Activated CD8-positive, alpha-beta T cell treated with anti-CD3 and anti-CD28 coated beads, Interleukin-2, amount 10 ng/mL, durations not matched to agents 7 days and 5 days (primary cell): ENCODE measurements at regions of chr7 and their contacts with region 1.

Region 1: GRCh38 chr7:155205368-155206317 is 92.0 kb upstream of the INSIG1 start:
- DNase-seq: peak; percentile 96
- ATAC-seq: peak; percentile 95
- H3K4me3 Mint-ChIP-seq: peak overlapping the region; percentile 71
- H3K27ac Mint-ChIP-seq: peak overlapping the region; percentile 97
- H3K4me1 Mint-ChIP-seq: peaks cover 27% of the 10 kb centered on the region
- H3K27me3 Mint-ChIP-seq: no peaks in the 10 kb centered on the region

Region 2: DNA sequence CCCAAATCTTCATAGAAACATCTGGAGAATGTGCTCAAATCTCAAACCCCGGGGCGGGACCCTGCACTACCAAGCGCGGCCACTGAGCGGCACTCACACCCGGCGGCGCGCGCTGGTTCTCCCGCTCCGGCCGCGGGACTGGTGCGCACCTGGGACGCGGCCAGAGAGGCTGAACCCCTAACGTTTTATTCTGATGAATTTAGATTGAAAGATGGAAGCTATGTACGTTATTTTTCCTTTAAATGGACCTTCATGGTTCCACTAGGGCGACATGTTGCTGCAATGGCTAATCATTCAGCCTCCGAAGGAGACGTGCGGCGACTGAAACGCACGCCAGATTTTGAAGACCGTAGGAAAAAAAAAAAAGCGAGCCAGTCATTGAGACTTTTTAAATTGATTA is 15.0 kb before region 1 on chr7:
- CTCF ChIA-PET with region 1: interaction called, 13 read pairs
- POLR2A ChIA-PET with region 1: interaction called, 3 read pairs
- DNase-seq: peak; percentile 66
- ATAC-seq: peak; percentile 64
- H3K4me3 Mint-ChIP-seq: no peak overlapping the region
- H3K27ac Mint-ChIP-seq: no peak overlapping the region
- H3K4me1 Mint-ChIP-seq: peaks cover 21% of the 10 kb centered on the region
- H3K27me3 Mint-ChIP-seq: no peaks in the 10 kb centered on the region